PC-3 (cell line): ENCODE measurements at regions of chr1 and their contacts with region 1.

Region 1: DNA sequence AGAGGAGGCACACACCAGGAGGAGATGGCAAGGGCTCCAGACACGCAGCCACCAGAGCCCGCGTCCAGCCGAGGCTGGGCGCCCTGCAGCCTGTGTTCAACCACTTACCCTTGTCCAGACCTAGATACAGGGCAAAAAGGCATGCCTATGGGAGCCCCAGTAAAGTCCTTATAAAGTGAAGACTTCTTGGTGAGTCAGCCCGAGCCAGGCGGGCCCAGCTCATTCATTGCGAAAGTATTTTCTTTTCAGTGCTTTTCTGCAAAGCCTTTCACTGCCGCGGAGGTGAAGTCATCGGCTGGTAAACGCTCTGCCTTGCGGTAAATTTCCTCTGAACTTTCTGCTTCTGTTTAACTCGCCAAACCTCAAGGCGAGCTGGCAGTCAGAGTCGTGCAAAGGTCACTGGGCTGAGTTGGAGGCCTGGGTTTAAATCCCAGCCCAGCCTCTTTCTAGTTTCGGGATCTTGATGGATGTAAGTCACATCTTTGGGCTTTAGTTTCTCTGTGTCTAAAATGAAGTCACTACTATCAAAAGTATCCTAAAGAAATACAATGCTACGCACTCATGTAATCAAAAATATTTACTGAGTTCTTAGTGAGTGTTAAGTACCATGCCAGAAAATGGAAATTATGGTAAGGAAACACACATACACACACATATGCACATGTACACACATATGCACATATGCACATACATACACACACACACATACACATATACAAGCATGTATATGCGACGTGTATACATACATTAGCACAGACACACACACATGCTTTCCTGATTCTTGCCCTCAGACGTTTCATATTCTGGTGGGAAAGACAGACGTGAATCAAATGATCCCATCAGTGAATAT is 54.7 kb upstream of the IFFO2 start:
- DNase-seq: peak; percentile 99
- ATAC-seq: peak; percentile 82
- H3K4me3 ChIP-seq: peak overlapping the region; percentile 47; the same call in 1 of the 2 replicates
- H3K27ac ChIP-seq: peak overlapping the region; percentile 99
- H3K4me1 ChIP-seq: peaks cover 62% of the 10 kb centered on the region
- H3K27me3 ChIP-seq: no peaks in the 10 kb centered on the region
- CTCF ChIP-seq: no peak

Region 2: GRCh38 chr1:18926315-18927081 is 84.7 kb before region 1 on chr1:
- CTCF ChIA-PET with region 1: interaction called, 3 read pairs
- POLR2A ChIA-PET with region 1: no interaction called
- intact Hi-C with region 1: loop called (anchors 5 kb)
- DNase-seq: peak; percentile 96
- ATAC-seq: peak; percentile 70
- H3K4me3 ChIP-seq: peak overlapping the region; percentile 34; the same call in 1 of the 2 replicates
- H3K27ac ChIP-seq: peak overlapping the region; percentile 100
- H3K4me1 ChIP-seq: peaks cover 82% of the 10 kb centered on the region
- H3K27me3 ChIP-seq: no peaks in the 10 kb centered on the region
- CTCF ChIP-seq: no peak

Region 3: GRCh38 chr1:18956369-18957135 is 54.7 kb before region 1 on chr1 and contains the start of gene IFFO2:
- CTCF ChIA-PET with region 1: no interaction called
- POLR2A ChIA-PET with region 1: interaction called, 4 read pairs
- intact Hi-C with region 1: loop called (anchors 2 kb)
- DNase-seq: peak; percentile 97
- ATAC-seq: peak; percentile 82
- H3K4me3 ChIP-seq: peak within 1 kb of the TSS; percentile 99
- H3K27ac ChIP-seq: no peak within 1 kb of the TSS; the same call in 1 of the 2 replicates
- H3K4me1 ChIP-seq: peaks cover 34% of the 10 kb centered on the region
- H3K27me3 ChIP-seq: no peaks in the 10 kb centered on the region
- CTCF ChIP-seq: no peak
- total RNA-seq, gene IFFO2: 30.7 and 55.2 TPM in 2 replicates

Region 4: GRCh38 chr1:18972531-18972930 is 38.7 kb before region 1 on chr1:
- CTCF ChIA-PET with region 1: interaction called, 4 read pairs
- POLR2A ChIA-PET with region 1: interaction called, 3 read pairs
- intact Hi-C with region 1: loop called (anchors 1 kb)
- DNase-seq: peak; percentile 82
- ATAC-seq: peak; percentile 38
- H3K4me3 ChIP-seq: no peak overlapping the region
- H3K27ac ChIP-seq: no peak overlapping the region
- H3K4me1 ChIP-seq: peaks cover 22% of the 10 kb centered on the region
- H3K27me3 ChIP-seq: no peaks in the 10 kb centered on the region
- CTCF ChIP-seq: peak; percentile 54

Region 5: GRCh38 chr1:19033861-19034680 is 22.9 kb after region 1 on chr1:
- CTCF ChIA-PET with region 1: interaction called, 3 read pairs
- POLR2A ChIA-PET with region 1: no interaction called
- intact Hi-C with region 1: loop called (anchors 1 kb)
- DNase-seq: peak; percentile 97
- ATAC-seq: peak; percentile 93
- H3K4me3 ChIP-seq: no peak overlapping the region; the same call in 1 of the 2 replicates
- H3K27ac ChIP-seq: peak overlapping the region; percentile 72
- H3K4me1 ChIP-seq: peaks cover 29% of the 10 kb centered on the region
- H3K27me3 ChIP-seq: no peaks in the 10 kb centered on the region
- CTCF ChIP-seq: no peak

Region 6: GRCh38 chr1:19087737-19088594 is 76.7 kb after region 1 on chr1:
- CTCF ChIA-PET with region 1: no interaction called
- POLR2A ChIA-PET with region 1: no interaction called
- intact Hi-C with region 1: loop called (anchors 2 kb)
- DNase-seq: no peak
- ATAC-seq: peak; percentile 9; the same call in 1 of the 2 replicates
- H3K4me3 ChIP-seq: no peak overlapping the region
- H3K27ac ChIP-seq: no peak overlapping the region
- H3K4me1 ChIP-seq: no peaks in the 10 kb centered on the region; the same call in 1 of the 2 replicates
- H3K27me3 ChIP-seq: no peaks in the 10 kb centered on the region
- CTCF ChIP-seq: no peak